Thyroid gland (tissue), 4 donors: ENCODE measurements at regions of chr12 and their contacts with region 1.

Region 1: DNA sequence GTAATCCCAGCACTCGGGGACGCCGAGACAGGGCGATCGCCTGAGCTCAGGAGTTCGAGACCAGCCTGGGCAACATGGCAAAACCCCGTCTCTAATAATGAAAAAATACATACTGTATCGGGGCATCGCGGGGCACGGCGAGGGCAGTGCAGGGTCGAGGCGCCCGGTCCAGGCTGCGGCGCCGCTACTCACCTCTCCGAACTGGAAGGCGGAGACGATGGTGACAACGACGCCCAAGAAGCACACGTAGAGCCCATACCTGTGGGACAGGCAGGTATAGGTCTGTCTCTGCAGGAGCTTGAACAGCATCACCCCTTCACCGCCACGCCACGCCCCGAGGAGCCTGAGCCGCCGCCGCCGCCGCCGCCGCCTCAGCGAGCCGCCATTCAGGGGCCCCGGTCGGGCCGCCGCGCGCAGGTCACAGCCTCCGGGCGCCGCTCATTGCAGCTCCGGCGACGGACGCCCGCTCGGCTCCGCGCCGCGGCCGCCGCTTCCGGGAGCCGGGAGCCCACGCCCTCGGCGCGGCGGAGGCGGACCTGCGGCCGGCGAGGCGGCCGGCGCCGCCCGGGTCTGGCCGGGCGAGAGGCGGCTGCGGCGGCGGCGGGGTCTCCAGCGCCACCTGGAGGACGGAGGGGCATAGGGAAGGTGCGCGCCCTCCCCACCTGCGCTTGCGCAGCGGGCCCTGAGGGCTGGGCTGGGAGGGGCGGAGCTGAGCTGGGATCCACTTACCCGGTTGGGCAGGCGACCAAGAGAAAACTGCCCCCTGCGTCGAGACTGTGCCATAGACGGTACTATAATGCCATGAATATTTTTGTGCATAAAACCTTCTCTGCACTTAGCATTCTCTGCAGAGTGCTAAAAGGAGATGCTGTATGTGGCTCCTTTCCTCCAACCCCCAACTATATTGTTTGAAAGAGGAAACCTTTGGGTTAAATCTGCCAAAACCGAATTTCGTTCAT is at the start of gene GNPTAB:
- DNase-seq: peak; percentile 92 to 94
- H3K4me3 ChIP-seq: peak within 1 kb of the TSS; percentile 16 to 83 (median 41)
- H3K27ac ChIP-seq: peak within 1 kb of the TSS in 2 of 3 donors; percentile 16 to 64
- H3K4me1 ChIP-seq: peaks cover 0 to 7% of the 10 kb centered on the region in 2 donors
- H3K27me3 ChIP-seq: no peaks in the 10 kb centered on the region
- CTCF ChIP-seq: peak; percentile 57 to 98 (median 76)
- POLR2A ChIP-seq: peak in 1 of 2 donors; percentile 77
- total RNA-seq, gene GNPTAB: 26.5 to 40.8 (median 36.6) TPM

Region 2: GRCh38 chr12:101663298-101663697 is 167.3 kb before region 1 on chr12:
- intact Hi-C with region 1: no loop called
- DNase-seq: no peak
- H3K4me3 ChIP-seq: no peak overlapping the region
- H3K27ac ChIP-seq: no peak overlapping the region
- H3K4me1 ChIP-seq: no peaks in the 10 kb centered on the region
- H3K27me3 ChIP-seq: no peaks in the 10 kb centered on the region
- CTCF ChIP-seq: no peak
- POLR2A ChIP-seq: no peak

Region 3: DNA sequence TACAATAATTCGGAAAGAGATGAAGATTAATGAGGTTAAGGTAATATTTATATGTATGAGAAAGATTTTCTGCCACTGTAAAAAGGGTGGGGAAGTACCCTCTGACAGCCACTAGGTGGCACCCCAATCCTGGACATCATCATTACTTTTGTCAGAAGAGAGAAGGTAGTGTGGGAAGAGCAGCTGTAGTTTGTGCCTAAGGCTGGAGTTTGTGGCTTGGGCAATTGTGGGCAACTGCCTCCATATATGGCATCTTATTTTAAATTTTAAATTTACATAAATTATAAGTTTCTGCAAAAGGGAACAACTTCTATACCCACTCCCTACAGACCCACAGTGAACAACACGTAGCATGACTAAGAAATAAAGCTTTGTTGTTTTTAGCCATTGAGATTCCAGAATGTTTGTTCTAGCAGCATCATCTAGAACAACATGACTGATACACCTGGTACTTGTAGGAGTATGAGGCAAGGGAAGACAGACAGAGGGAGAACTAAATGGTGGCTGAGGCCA is 56.9 kb before region 1 on chr12:
- intact Hi-C with region 1: loop called (anchors 5 kb)
- DNase-seq: peak; percentile 50 to 62
- H3K4me3 ChIP-seq: no peak overlapping the region
- H3K27ac ChIP-seq: no peak overlapping the region
- H3K4me1 ChIP-seq: no peaks in the 10 kb centered on the region
- H3K27me3 ChIP-seq: no peaks in the 10 kb centered on the region
- CTCF ChIP-seq: peak; percentile 82 to 97 (median 86)
- POLR2A ChIP-seq: no peak

Region 4: DNA sequence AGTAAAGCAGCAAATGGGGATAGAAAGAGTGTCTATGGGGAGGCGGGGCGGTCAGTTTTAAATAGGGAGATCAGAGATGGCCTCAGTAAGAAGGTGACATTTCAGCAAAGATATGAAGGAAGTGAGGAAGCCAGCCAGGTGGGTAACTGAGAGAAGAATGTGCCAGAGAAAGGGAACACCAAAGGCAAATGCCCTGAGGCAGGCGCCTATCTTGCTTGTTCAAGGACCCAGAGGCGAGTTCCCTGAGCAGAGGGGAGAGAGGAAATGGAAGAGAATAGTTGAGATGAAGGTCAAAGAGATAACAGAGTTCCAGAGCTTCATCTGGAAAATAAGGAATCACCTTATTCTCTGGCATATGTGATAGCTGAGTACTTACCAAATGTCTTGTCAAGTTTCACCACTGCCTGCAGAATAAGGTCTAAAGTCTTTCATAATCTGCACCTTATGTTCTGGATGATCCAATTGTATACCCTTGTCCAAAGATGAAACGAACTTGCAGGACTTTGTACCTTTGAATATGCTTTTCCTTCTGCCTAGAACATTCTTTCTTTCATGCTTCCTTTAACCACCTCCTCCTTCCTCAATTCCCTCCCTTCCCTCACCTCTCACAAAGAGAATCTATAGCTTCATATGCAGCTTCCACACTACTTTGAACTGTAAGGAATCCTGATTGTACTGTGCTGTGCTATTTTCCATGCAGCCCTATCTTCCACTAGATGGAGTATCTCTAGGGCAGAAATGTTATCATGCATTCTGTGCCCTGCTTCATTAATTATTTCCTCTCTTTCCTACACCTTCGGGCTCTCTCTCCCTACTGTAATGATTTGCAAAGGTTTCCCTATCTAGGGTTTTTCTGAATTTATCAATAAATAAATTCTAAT is 38.4 kb before region 1 on chr12:
- intact Hi-C with region 1: loop called (anchors 5 kb)
- DNase-seq: no peak
- H3K4me3 ChIP-seq: no peak overlapping the region
- H3K27ac ChIP-seq: no peak overlapping the region
- H3K4me1 ChIP-seq: no peaks in the 10 kb centered on the region
- H3K27me3 ChIP-seq: no peaks in the 10 kb centered on the region
- CTCF ChIP-seq: peak in 1 of 6 experiments; percentile 17
- POLR2A ChIP-seq: no peak

Region 5: DNA sequence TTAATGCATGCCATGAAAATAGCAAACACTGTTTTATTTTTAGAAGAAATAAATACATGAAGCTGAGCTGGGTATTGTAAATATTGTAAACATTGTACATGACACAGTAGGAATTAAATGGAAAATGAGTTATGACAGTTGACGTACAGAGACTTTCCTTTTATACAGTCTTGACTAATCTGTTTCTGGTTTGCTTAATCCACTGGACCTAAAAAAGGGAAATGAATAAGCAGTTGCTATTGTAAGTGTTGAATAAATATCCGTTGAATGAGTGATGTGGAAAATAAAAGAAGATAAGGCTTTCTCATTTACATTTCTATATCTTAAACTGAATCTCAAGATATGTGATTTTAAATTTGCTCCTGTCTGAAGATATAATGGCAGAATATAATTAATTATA is 352.0 kb after region 1 on chr12:
- intact Hi-C with region 1: no loop called
- DNase-seq: no peak
- H3K4me3 ChIP-seq: no peak overlapping the region
- H3K27ac ChIP-seq: no peak overlapping the region
- H3K4me1 ChIP-seq: no peaks in the 10 kb centered on the region
- H3K27me3 ChIP-seq: no peaks in the 10 kb centered on the region
- CTCF ChIP-seq: no peak
- POLR2A ChIP-seq: no peak